Activated CD8-positive, alpha-beta T cell treated with anti-CD3 and anti-CD28 coated beads, Interleukin-2, amount 10 ng/mL, durations not matched to agents 7 days and 5 days (primary cell): ENCODE measurements at regions of chr19 and their contacts with region 1.

Region 1: GRCh38 chr19:10403137-10404021 is at the start of gene CDC37:
- DNase-seq: peak; percentile 98
- ATAC-seq: peak; percentile 71
- H3K4me3 Mint-ChIP-seq: peak within 1 kb of the TSS; percentile 94
- H3K27ac Mint-ChIP-seq: peak within 1 kb of the TSS; percentile 95
- H3K4me1 Mint-ChIP-seq: peaks cover 70% of the 10 kb centered on the region
- H3K27me3 Mint-ChIP-seq: no peaks in the 10 kb centered on the region
- total RNA-seq, gene CDC37: 264 to 288 TPM

Region 2: DNA sequence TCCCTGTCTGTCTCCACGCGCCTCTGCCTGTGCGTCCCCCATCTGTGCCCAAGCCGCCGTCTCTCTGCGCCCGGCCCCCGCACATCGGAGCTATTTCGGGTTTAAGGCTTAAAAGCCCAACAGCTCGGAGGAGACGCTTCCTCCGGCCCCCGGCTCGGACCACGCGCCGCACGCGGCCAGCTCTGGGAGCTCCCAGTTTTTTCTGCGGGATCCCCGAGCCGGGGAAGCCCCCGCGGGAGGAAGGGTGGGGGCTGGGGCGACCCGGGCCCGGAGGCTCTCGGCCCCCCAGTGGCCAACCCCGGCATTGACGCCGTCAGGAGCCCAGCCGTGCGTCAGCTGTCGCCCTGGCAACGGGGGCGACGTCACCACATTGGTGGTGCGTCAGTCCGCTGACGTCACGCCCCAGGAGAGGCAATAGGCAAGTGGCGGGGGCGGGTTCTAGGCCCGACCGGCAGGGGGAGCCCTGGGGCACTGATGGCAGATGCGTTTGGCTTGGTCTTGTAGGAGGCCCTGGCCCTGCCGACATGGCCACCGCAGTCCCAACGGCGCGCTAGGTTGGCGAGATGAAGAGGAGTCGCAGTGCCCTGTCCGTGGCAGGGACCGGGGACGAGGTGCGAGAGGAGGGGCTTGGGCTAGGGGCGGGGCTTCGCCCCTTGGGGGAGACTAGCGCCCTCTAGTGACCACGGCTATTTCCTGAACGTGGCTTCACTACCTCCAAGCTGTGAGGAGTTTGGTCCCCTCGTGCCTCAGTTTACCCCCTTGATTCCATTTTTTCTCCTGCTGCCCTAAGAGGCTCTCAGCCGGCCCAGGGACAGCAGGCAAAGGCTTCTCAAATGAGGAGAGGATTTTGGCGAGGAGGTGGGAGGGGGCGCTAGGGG is 13.2 kb after region 1 on chr19:
- CTCF ChIA-PET with region 1: interaction called, 1,132 read pairs
- POLR2A ChIA-PET with region 1: interaction called, 239 read pairs
- DNase-seq: peak; percentile 96
- ATAC-seq: peak; percentile 45
- H3K4me3 Mint-ChIP-seq: peak overlapping the region; percentile 75
- H3K27ac Mint-ChIP-seq: peak overlapping the region; percentile 92
- H3K4me1 Mint-ChIP-seq: peaks cover 66% of the 10 kb centered on the region
- H3K27me3 Mint-ChIP-seq: no peaks in the 10 kb centered on the region

Region 3: DNA sequence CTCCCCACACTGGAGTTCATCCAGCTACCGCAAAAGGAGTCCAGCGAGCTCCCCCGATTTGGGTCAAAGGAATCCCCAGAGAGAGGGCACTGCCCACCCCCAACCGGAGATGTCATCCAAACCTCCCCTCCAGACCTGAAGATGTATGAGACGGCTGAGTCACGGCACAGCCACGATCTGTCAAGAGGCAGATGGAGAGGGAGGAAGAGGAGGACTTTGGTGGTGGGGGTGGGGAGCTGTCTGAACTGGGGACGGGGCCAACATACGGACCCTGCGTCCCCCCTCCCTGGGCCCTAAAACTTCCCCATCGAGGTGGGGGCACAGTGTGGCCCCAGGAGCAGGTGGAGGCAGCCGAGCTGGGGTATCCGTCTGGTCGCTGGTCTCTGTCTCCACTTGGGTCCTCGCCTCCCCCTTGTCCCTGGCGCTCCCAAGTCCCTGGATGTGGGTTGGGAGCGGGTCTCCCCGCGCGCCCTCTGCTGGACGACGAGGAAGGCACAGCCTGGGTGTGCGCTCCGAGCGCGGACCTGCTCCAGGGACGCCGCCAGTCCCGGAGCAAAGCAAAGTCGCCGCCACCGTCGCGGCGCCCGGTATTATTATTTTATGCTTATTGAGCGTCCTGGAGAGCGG is 20.7 kb after region 1 on chr19:
- CTCF ChIA-PET with region 1: interaction called, 1,132 read pairs
- POLR2A ChIA-PET with region 1: interaction called, 239 read pairs
- DNase-seq: peak; percentile 74
- ATAC-seq: peak; percentile 12
- H3K4me3 Mint-ChIP-seq: peak overlapping the region; percentile 77
- H3K27ac Mint-ChIP-seq: peak overlapping the region; percentile 84
- H3K4me1 Mint-ChIP-seq: peaks cover 84% of the 10 kb centered on the region
- H3K27me3 Mint-ChIP-seq: peaks cover 2% of the 10 kb centered on the region

Region 4: DNA sequence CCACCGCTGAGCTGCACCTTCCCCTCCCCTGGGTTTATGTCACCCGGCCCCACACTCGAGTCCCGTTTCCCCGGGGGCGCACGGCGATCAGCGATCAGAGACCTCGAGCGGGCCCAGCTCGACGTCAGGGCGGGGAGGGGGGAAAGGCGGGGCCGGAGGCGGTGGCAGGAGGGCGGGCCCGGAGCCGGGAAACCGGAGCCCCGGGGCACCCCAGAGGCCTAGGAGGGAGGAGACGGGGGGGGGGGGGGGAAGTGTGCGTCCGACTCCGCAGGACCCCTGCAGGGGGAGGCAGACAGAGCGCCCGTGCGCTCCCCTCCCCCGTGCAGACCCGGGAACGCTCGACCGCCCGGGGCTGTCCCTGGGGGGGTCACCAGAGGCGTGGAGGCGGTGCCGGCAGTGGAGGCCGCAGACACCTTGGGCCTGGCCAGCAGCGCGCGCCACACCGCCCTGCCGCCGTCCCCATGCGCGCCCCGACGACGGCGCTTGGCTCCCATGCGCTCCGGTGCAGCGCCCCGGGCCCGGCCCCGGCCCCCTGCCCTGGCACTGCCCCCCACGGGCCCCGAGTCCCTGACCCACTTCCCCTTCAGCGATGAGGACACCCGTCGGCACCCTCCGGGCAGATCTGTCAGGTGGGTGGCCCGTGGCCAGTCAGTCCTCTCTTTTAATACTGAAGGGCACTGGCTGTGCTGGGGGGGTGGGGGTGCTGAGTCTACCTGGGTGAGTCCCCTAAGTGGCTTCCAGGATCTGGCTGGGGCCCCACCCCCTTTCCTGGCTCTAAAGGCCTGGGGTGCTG is 28.8 kb after region 1 on chr19:
- CTCF ChIA-PET with region 1: interaction called, 1,132 read pairs
- POLR2A ChIA-PET with region 1: interaction called, 20 read pairs
- DNase-seq: peak; percentile 73
- ATAC-seq: peak; percentile 46
- H3K4me3 Mint-ChIP-seq: peak overlapping the region; percentile 84
- H3K27ac Mint-ChIP-seq: peak overlapping the region; percentile 95
- H3K4me1 Mint-ChIP-seq: peaks cover 78% of the 10 kb centered on the region
- H3K27me3 Mint-ChIP-seq: peaks cover 2% of the 10 kb centered on the region

Region 5: GRCh38 chr19:10478903-10479384 is 75.6 kb after region 1 on chr19:
- CTCF ChIA-PET with region 1: interaction called, 10 read pairs
- POLR2A ChIA-PET with region 1: no interaction called
- DNase-seq: peak; percentile 93
- ATAC-seq: peak; percentile 97
- H3K4me3 Mint-ChIP-seq: peak overlapping the region; percentile 55
- H3K27ac Mint-ChIP-seq: peak overlapping the region; percentile 57
- H3K4me1 Mint-ChIP-seq: peaks cover 30% of the 10 kb centered on the region
- H3K27me3 Mint-ChIP-seq: no peaks in the 10 kb centered on the region

Region 6: GRCh38 chr19:10551698-10552301 is 148.4 kb after region 1 on chr19:
- CTCF ChIA-PET with region 1: interaction called, 10 read pairs
- POLR2A ChIA-PET with region 1: interaction called, 4 read pairs
- DNase-seq: peak; percentile 62
- ATAC-seq: no peak
- H3K4me3 Mint-ChIP-seq: peak overlapping the region; percentile 25
- H3K27ac Mint-ChIP-seq: peak overlapping the region; percentile 93
- H3K4me1 Mint-ChIP-seq: peaks cover 62% of the 10 kb centered on the region
- H3K27me3 Mint-ChIP-seq: no peaks in the 10 kb centered on the region